Calu3 (cell line): ENCODE measurements at regions of chr12 and their contacts with region 1.

Region 1: DNA sequence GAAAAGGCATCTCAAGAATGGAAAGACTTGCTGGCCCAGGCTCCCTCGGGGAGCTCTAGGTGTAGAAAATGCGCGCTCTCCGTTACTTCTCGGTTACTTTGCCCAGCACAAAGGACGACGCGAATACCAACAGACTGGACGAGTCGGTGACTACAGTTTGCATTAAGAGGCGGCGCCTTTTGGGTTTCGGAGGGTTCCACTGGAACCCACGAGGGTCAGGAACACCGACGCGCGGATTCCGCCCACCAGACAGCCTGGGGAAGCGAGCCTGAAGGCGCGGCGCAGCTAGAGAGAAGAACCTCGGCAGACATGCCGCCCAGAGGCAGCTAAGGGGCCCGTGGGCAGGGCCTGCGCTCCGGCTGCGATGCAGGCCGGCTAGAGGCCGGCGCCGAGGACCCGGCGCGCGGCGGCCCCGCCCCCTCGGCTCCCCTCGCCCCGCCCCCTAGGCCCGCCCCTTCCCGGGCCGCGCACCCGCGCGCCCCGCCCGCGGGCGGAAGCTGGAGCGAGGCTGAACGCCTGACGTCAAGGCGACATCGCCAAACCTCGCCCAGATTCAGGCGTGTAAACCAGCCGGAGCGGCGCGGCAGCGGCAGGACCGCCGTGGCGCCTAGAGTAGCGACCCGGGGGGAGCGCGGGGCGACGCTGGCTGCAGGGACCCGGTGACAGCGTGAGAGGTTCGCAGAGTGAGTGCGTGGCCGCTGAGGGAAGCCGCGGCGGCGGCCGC is at the start of gene RAP1B:
- DNase-seq: peak; percentile 91
- H3K4me3 Mint-ChIP-seq: peak within 1 kb of the TSS; percentile 85
- H3K27ac Mint-ChIP-seq: peak within 1 kb of the TSS; percentile 96
- H3K4me1 Mint-ChIP-seq: peaks cover 48% of the 10 kb centered on the region
- H3K27me3 Mint-ChIP-seq: no peaks in the 10 kb centered on the region
- CTCF ChIP-seq: no peak
- total RNA-seq, gene RAP1B: 158 and 159 TPM in 2 replicates

Region 2: DNA sequence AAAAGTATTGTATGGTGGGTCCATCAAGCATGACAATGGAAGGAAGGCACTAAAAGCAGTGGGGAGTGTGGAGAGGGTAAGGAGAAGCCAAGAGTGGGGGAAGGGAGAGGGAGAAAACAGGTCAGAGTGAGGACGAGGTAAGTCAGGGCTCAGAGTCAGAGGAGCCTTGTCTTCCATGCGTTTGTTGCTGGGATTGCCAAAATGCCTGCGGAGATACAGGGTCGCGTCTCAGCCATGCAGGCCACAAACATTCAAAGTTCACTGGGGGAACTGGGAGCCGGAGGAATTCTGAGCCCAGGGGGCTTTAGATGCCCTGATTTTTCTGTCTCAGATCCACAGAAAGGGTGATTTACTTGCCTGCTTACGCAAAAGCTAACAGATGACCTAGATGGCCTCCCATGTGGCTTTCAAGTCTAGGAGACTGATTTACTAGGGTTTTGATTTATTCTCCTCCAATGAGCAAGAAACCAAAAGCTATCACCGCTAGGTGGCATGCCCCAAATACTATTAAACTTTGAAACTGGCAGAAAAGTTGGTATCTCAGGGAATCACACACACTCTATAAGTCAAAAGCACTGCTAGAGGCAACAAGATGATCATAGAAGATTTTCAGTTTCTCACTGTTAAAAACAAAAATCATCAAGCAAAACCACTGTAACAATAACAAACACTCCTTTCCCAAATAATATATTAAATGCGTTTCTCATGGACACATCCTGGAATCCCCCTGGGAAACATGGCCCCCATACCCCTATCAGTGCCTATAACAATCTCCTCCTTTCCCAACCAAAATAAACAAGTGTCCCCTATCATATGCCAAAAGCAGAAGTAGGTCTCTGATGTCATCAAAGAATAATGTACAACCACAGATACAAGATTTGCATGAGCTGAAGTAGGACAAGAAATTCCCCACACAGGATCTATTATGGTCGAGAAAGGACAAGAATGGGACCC is 251.7 kb before region 1 on chr12:
- CTCF ChIA-PET with region 1: interaction called, 5 read pairs
- intact Hi-C with region 1: loop called (anchors 2 kb)
- DNase-seq: peak; percentile 66
- H3K4me3 Mint-ChIP-seq: no peak overlapping the region
- H3K27ac Mint-ChIP-seq: no peak overlapping the region
- H3K4me1 Mint-ChIP-seq: no peaks in the 10 kb centered on the region
- H3K27me3 Mint-ChIP-seq: peaks cover 26% of the 10 kb centered on the region
- CTCF ChIP-seq: no peak

Region 3: GRCh38 chr12:68497702-68498101 is 112.8 kb before region 1 on chr12:
- CTCF ChIA-PET with region 1: no interaction called
- intact Hi-C with region 1: no loop called
- DNase-seq: no peak
- H3K4me3 Mint-ChIP-seq: no peak overlapping the region
- H3K27ac Mint-ChIP-seq: no peak overlapping the region
- H3K4me1 Mint-ChIP-seq: no peaks in the 10 kb centered on the region
- H3K27me3 Mint-ChIP-seq: peaks cover 38% of the 10 kb centered on the region
- CTCF ChIP-seq: no peak

Region 4: DNA sequence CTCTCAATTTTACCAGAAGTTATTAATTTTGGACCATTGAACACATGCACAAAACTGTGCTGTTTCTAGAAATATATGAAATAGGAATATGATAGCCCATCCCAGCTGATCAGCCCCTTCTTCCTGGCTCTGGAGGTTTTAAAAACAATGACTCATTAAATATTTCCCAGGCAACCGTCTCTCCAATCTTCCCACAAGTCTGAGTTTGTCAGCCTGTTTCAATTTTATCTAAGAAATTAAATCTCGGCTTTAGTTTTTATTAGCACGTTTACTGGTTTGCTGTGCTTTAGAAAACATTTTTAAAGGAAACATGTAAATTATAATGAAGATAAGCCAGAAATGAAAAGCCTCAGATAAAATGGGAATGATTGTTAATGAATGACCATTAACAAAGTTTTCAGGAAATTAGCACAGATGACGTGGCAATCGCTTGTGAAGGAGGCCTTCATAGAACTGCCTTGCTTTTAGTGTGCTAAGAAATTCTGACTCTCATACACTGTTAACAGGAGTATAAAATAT is 89.2 kb before region 1 on chr12:
- CTCF ChIA-PET with region 1: no interaction called
- intact Hi-C with region 1: loop called (anchors 5 kb)
- DNase-seq: peak; percentile 21
- H3K4me3 Mint-ChIP-seq: peak overlapping the region; percentile 21
- H3K27ac Mint-ChIP-seq: peak overlapping the region; percentile 84
- H3K4me1 Mint-ChIP-seq: peaks cover 14% of the 10 kb centered on the region
- H3K27me3 Mint-ChIP-seq: no peaks in the 10 kb centered on the region
- CTCF ChIP-seq: no peak

Region 5: GRCh38 chr12:68665016-68665569 is 54.6 kb after region 1 on chr12:
- CTCF ChIA-PET with region 1: no interaction called
- intact Hi-C with region 1: loop called (anchors 1 kb)
- DNase-seq: no peak
- H3K4me3 Mint-ChIP-seq: no peak overlapping the region
- H3K27ac Mint-ChIP-seq: no peak overlapping the region
- H3K4me1 Mint-ChIP-seq: no peaks in the 10 kb centered on the region
- H3K27me3 Mint-ChIP-seq: no peaks in the 10 kb centered on the region
- CTCF ChIP-seq: no peak

Region 6: DNA sequence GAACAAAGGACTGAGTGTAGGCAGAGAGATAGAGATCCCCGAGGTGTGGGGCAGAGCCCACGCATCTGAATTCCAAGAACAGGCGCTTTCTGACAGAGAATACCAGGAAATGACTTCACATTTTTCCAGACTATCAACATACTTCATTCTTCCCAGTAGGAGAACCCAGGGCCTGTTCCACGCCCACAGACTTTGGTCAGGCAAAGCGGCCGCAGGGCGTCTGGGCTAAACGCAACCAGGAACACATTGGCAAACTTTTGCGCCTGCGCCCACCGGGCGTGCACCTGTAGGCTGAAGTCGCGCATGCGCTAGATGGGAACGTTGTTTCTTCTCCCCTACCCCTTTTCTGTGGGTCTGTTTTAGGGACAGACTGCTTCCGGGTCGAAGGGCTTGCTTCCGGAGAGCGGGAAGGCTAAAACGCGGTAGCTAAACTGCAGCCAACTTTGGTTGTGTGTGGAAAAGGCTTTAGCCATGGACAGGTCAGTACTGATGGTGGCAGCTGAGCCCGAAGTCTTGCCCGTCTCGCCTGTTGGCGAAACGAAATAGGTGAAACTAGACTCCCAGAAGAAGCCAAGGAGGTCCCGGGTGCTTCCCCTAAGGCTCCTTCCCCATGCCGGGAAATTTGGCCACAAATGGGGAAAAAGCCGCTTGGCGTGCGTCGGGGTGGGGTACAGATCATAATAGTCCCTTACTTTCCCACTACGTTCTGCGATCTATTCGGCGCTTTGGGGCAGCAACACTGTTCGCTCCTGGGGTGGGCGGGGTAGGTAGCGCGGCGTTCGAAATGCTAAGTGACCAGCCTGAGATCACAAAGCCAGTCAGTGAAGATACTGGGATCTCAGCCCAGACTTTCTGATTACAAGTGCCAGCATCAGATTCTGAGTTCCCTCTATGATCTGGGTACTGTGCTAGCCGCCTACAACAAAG is 76.3 kb after region 1 on chr12 and contains the start of gene NUP107:
- CTCF ChIA-PET with region 1: no interaction called
- intact Hi-C with region 1: loop called (anchors 5 kb)
- DNase-seq: peak; percentile 99
- H3K4me3 Mint-ChIP-seq: peak within 1 kb of the TSS; percentile 89
- H3K27ac Mint-ChIP-seq: peak within 1 kb of the TSS; percentile 93
- H3K4me1 Mint-ChIP-seq: peaks cover 22% of the 10 kb centered on the region
- H3K27me3 Mint-ChIP-seq: no peaks in the 10 kb centered on the region
- CTCF ChIP-seq: no peak
- total RNA-seq, gene NUP107: 110 and 112 TPM in 2 replicates